ENCODE measurements at regions of chr16 and their contacts with region 1.

Region 1: GRCh38 chr16:31440516-31441184 is 1.9 kb downstream of the ZNF843 start:
- DNase-seq: no peak
- H3K4me3 ChIP-seq: no peak overlapping the region
- H3K27ac ChIP-seq: peak overlapping the region in 1 of 2 experiments; percentile 51; a peak in 1 of 4 replicates
- H3K4me1 ChIP-seq: peaks cover 0 to 5% of the 10 kb centered on the region in 2 experiments; a peak in 1 of 4 replicates
- H3K27me3 ChIP-seq: no peaks in the 10 kb centered on the region
- CTCF ChIP-seq: no peak
- EP300 ChIP-seq: no peak
- RAD21 ChIP-seq: no peak

Region 2: DNA sequence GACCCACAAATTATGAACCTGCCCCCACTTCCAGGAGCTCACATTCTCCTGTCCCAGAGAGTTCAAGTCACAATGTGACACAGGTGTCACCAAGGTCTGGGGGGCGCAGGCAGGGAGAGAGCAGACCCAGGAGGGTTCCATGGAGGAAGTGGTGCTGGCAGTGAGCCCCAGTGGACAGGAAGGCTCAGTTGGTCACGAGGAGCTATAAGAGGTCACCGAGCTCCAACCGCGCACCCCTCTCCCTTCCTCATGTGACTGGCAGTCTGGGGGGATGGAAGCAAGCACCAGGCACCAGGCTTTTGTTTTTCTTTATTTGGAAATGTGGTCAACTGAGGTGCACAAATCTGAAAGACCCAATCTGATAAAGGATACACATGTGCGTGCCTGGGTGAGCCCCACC is 45.0 kb before region 1 on chr16:
- CTCF ChIA-PET with region 1: no interaction called
- POLR2A ChIA-PET with region 1: no interaction called
- DNase-seq: no peak
- H3K4me3 ChIP-seq: no peak overlapping the region
- H3K27ac ChIP-seq: no peak overlapping the region
- H3K4me1 ChIP-seq: no peaks in the 10 kb centered on the region
- H3K27me3 ChIP-seq: peaks cover 38% of the 10 kb centered on the region
- CTCF ChIP-seq: no peak
- EP300 ChIP-seq: no peak
- RAD21 ChIP-seq: no peak

Region 3: GRCh38 chr16:31416371-31416770 is 24.3 kb before region 1 on chr16:
- CTCF ChIA-PET with region 1: no interaction called
- POLR2A ChIA-PET with region 1: no interaction called
- DNase-seq: no peak
- H3K4me3 ChIP-seq: no peak overlapping the region
- H3K27ac ChIP-seq: no peak overlapping the region
- H3K4me1 ChIP-seq: no peaks in the 10 kb centered on the region
- H3K27me3 ChIP-seq: peaks cover 50% of the 10 kb centered on the region; the same call in 1 of the 2 replicates
- CTCF ChIP-seq: no peak
- EP300 ChIP-seq: no peak
- RAD21 ChIP-seq: no peak

Region 4: DNA sequence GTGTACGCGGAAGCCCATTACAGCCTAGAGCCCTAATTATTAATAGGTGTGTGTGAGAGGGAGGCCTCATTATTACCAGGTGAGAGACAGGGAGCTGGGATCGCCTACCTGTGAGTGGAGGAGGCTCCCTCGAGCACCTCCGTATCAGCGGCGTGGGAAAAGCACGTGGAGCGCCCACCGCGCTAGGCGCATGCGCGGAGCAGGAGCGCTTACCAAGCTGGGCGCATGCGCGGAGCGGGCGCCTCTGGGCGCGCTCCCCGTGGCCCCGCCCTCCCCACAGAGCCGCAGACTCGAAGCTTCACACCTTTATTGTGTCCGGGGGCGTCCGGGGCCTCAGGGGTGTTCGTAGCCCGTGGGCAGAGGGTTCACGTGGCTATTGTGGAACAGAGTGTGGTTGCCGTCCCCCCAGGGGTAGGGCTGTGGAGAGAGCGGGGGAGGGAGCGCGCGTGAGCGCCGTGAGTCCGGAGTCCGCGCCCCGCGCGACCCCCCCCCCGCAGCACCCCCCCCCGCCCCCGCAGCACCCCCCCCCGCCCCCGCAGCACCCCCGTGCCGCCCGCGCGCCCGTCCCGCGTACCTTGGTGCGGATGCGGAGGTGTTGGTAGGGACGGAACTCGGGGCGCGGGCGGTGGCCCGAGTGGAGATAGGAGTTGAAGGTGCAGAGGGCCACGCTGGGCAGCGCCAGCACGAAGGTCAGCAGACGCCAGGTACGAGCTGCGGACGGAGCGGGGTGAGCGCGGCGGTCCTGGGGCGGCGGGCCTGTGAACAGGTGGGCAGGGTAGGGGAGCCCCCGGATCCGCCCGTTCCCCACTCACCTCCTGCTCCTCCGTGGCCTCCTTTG is 13.0 kb before region 1 on chr16:
- CTCF ChIA-PET with region 1: interaction called, 13 read pairs
- POLR2A ChIA-PET with region 1: no interaction called
- DNase-seq: peak; percentile 93
- H3K4me3 ChIP-seq: peak overlapping the region in 1 of 2 experiments; percentile 33; a peak in 2 of 4 replicates
- H3K27ac ChIP-seq: no peak overlapping the region
- H3K4me1 ChIP-seq: no peaks in the 10 kb centered on the region; a peak in 1 of 4 replicates
- H3K27me3 ChIP-seq: peaks cover 42% of the 10 kb centered on the region
- CTCF ChIP-seq: no peak
- EP300 ChIP-seq: no peak
- RAD21 ChIP-seq: no peak

Region 5: DNA sequence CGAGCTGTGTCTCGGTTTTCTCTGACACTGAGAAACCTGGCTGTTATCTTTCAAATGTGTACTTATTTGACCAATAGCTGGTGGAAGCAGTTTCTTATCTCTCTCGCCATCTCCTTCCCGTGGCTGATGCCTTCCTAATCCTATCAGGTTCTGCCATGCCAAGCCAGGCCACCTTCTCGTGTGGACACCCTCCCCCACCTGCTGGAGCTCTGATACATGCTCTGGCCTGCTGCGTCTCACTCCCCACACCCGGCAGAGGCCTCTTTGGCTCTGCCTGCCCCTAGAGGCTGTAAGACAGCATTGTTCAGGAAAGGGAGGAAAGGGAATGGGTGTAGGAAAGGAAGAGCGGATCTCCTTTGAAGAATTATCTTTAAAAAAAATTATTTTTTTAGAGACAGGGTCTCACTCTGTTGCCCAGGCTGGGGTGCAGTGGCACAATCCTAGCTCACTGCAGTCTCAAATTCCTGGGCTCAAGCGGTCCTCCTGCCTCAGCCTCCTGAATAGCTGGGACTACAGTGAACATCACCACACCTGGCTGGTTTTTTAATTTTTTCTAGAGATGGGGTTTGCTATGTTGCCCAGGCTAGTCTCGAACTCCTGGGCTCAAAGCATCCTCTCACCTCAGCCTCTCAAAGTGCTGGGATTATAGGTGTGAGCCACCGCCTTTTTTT is 11.2 kb after region 1 on chr16:
- CTCF ChIA-PET with region 1: interaction called, 80 read pairs
- POLR2A ChIA-PET with region 1: interaction called, 11 read pairs
- DNase-seq: peak; percentile 77
- H3K4me3 ChIP-seq: no peak overlapping the region
- H3K27ac ChIP-seq: peak overlapping the region; percentile 20 to 95; a peak in 3 of 4 replicates
- H3K4me1 ChIP-seq: peaks cover 30 to 42% of the 10 kb centered on the region in 2 experiments; a peak in 3 of 4 replicates
- H3K27me3 ChIP-seq: no peaks in the 10 kb centered on the region
- CTCF ChIP-seq: peak; percentile 66
- EP300 ChIP-seq: no peak
- RAD21 ChIP-seq: peak; percentile 56

Region 6: DNA sequence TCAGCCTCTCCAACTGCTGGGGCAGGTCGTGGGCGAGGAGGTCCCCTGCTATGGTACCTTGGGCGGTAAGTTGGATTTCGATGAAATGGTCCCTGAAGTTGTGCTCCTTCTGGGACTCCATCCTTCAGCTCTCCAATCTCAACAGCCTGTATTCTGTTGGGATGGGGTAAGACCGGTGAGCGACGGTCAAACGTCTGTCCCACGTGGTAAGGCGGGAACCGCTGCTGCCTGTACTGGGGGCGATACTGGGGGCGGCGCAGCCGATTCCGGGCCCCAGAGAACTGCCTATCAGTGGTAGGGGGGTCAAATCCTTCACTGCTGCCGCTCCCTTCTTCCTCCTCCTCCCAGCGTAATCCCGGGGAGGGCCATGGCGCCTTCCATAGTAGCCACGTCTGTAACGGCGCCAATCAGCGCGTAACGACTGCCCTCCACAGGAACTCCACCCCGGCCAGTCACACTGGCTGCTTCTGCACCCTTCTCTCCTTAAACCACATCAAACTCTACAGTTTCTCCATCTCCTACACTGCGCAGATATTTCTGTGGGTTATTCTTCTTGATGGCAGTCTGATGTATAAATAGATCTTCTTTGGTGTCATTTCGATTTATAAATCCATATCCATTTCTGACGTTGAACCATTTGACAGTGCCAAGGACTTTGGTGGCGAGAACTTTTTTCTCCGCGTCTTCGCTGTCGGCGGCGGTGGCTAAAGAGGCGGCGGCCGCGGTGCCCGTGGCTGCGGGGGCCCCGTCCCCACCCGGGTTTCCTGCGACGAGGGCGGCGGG is 128.1 kb after region 1 on chr16:
- CTCF ChIA-PET with region 1: no interaction called
- POLR2A ChIA-PET with region 1: no interaction called
- DNase-seq: peak; percentile 20
- H3K4me3 ChIP-seq: peak overlapping the region; percentile 8 to 16; a peak in 2 of 4 replicates
- H3K27ac ChIP-seq: no peak overlapping the region
- H3K4me1 ChIP-seq: no peaks in the 10 kb centered on the region
- H3K27me3 ChIP-seq: peaks cover 8% of the 10 kb centered on the region; the same call in 1 of the 2 replicates
- CTCF ChIP-seq: no peak
- EP300 ChIP-seq: no peak
- RAD21 ChIP-seq: no peak

Measured in SK-N-SH (cell line).